Activated naive CD4-positive, alpha-beta T cell treated with anti-CD3 and anti-CD28 coated beads, Interleukin-2, amount 10 ng/mL, durations not matched to agents 7 days and 5 days (primary cell): ENCODE measurements at regions of chr5 and their contacts with region 1.

Region 1: GRCh38 chr5:101977729-101978345 is 318.2 kb downstream of the SLCO4C1 start:
- DNase-seq: no peak
- H3K4me3 Mint-ChIP-seq: no peak overlapping the region
- H3K27ac Mint-ChIP-seq: no peak overlapping the region
- H3K4me1 Mint-ChIP-seq: no peaks in the 10 kb centered on the region
- H3K27me3 Mint-ChIP-seq: no peaks in the 10 kb centered on the region

Region 2: DNA sequence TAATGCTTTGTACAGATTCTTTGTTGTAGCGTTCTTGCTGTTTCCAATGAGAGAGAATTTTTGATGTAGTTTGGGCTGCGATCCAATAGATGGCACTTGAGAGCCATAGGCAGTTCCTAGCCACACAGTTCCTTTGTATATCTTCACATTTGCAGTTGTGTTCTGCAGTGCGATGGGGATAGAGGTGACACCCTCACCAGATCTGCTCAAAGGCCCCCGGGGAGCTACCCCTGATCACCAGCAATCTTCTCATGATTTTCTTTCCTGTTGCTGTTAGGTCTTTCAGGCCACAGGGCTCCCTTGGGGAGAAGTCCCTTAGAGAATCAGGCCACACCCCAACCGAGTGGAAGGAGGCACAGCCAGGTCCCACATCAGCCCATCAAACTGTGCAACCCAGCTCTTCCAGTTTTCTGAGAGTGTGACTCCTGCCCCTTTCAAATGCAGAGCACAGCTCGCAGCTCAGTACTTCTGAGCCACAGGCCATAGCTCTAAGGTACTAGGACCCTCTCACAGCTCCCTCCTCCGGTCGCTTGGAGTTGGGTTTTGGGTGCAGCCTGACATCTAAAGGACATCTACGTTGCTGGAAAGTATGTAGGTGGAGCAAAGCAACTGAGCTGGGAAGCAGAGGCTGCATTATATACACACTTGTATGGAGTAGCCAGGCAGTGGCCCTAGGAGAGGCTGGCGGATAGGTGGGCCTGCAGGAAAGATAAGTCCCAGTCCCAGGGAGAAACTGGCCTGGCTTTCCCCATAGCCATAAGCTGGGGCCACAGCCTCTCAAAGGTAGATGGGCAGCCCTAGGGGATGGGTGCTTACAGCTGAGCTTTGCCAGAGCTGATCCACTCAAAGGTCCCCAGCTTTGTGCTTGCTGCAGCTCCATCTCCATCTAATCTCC is 35.3 kb before region 1 on chr5:
- CTCF ChIA-PET with region 1: interaction called, 17 read pairs
- DNase-seq: peak; percentile 21
- H3K4me3 Mint-ChIP-seq: no peak overlapping the region
- H3K27ac Mint-ChIP-seq: no peak overlapping the region
- H3K4me1 Mint-ChIP-seq: peaks cover 3% of the 10 kb centered on the region
- H3K27me3 Mint-ChIP-seq: no peaks in the 10 kb centered on the region